Activated CD4-positive, alpha-beta memory T cell treated with anti-CD3 and anti-CD28 coated beads for 36 hours (primary cell): ENCODE measurements at regions of chr15 and their contacts with region 1.

Region 1: DNA sequence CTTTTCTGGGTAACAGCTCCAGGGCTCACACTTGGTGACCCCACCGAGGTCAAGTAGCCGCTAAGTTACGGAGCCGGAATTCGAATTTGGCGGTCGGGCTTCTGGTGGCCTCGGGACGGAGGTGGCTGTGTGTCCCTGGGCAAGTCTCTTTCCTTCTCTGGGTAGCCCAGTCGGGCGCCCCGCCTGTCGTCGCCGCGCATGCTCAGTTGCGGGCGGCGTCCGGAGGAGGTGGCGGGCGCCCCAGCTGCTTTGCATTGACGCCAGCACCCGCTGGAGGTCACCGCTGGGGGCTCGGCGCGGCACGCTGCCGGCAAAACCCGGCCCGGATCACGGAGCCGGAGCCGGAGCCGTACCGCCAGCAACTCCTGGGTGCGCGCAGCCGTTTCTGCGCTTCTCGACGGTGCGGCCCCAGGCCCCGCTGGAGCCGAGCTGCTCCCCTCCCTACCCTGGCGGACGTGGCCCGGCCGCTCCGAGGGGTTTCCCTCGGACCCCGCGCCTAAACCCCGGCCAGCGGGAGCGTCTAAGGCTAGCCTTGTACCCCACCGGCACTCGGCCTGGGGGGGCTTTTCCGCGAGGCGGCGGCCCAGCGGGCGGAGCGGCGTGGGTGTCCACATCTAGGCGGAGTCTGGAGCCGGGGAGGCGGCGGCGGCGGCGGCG is 474 bp upstream of the PDE8A start:
- DNase-seq: peak; percentile 97
- H3K4me3 Mint-ChIP-seq: peak overlapping the region; percentile 90
- H3K27ac Mint-ChIP-seq: peak overlapping the region; percentile 92
- H3K4me1 Mint-ChIP-seq: peaks cover 37% of the 10 kb centered on the region
- H3K27me3 Mint-ChIP-seq: no peaks in the 10 kb centered on the region

Region 2: DNA sequence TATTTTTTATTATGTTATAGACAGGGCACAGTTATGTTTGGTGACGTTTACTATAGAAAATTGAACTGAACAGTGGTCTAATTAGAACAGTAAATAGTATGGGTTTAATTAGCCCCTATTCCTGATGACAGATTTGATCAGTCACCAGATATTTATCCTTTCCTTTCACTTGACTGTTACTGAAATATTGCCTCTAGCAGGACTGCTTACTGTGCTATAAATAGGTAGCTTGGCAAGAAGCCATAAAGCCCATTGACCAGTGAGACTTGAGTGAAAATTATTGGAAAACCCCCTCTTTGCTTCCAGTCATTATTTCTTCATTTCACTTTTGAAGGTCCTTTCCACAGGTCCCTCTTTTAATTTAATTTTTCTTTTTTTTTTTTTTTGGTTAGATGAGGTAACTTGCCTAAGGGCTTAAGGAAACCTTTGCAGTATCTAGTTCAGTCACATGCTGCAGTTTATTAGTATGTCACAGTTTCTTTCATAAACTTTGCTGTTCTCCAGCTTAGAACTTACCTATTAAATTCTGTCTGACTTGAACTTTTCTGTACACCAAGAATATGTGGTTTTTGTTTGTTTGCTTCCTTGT is 1211.7 kb before region 1 on chr15:
- CTCF ChIA-PET with region 1: no interaction called
- POLR2A ChIA-PET with region 1: no interaction called
- intact Hi-C with region 1: no loop called
- DNase-seq: no peak
- H3K4me3 Mint-ChIP-seq: no peak overlapping the region
- H3K27ac Mint-ChIP-seq: no peak overlapping the region
- H3K4me1 Mint-ChIP-seq: no peaks in the 10 kb centered on the region
- H3K27me3 Mint-ChIP-seq: peaks cover 7% of the 10 kb centered on the region

Region 3: DNA sequence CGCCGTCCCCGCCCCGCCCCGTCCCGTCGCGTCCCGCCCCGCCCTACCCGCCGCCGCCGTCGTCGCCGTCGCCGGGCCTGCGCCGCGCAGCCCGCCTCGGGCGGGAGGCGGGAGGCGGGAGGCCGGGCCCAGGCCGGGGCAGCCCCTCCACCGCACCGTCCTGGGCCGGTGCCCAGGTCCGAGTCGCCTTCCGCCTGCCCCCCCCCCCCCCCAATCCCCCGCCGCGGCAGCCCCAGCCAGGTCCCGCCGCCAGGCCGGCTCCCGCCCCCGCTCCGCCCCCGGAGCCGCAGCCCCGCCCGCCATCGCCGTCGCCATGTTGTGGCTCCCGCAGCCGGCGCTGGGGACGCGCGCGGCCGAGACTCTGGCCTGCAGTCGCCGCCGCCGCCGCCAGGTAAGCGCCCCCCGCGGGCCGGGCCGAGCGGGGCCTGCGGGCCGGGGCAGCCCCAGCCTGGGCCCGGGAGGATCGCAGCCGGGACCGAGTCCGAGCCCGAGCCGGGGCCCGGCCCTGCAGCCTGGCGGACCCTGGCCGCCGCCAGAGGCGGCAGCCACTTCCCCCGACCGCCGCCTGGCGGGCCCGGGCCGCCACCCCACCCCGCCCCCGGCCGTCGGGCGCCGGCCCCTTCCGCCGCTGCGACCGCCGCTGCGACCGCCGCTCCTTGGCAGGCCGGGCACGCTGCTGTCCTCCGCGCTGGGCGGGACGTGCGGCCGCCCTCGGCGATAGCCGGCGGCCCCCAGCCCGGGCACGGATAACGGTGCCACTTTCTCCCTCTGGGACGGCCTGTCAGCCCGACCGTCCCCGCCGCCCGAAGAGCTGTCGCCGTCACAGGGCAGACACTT is 232.7 kb before region 1 on chr15 and contains the start of gene ZNF592:
- CTCF ChIA-PET with region 1: no interaction called
- POLR2A ChIA-PET with region 1: interaction called, 3 read pairs
- intact Hi-C with region 1: loop called (anchors 5 kb)
- DNase-seq: peak; percentile 84
- H3K4me3 Mint-ChIP-seq: peak within 1 kb of the TSS; percentile 97
- H3K27ac Mint-ChIP-seq: peak within 1 kb of the TSS; percentile 98
- H3K4me1 Mint-ChIP-seq: peaks cover 57% of the 10 kb centered on the region
- H3K27me3 Mint-ChIP-seq: no peaks in the 10 kb centered on the region
- total RNA-seq, gene ZNF592: 23.8 to 24.3 TPM

Region 4: GRCh38 chr15:84799349-84800187 is 181.6 kb before region 1 on chr15:
- CTCF ChIA-PET with region 1: no interaction called
- POLR2A ChIA-PET with region 1: no interaction called
- intact Hi-C with region 1: no loop called
- DNase-seq: no peak
- H3K4me3 Mint-ChIP-seq: no peak overlapping the region
- H3K27ac Mint-ChIP-seq: no peak overlapping the region
- H3K4me1 Mint-ChIP-seq: no peaks in the 10 kb centered on the region
- H3K27me3 Mint-ChIP-seq: no peaks in the 10 kb centered on the region

Region 5: DNA sequence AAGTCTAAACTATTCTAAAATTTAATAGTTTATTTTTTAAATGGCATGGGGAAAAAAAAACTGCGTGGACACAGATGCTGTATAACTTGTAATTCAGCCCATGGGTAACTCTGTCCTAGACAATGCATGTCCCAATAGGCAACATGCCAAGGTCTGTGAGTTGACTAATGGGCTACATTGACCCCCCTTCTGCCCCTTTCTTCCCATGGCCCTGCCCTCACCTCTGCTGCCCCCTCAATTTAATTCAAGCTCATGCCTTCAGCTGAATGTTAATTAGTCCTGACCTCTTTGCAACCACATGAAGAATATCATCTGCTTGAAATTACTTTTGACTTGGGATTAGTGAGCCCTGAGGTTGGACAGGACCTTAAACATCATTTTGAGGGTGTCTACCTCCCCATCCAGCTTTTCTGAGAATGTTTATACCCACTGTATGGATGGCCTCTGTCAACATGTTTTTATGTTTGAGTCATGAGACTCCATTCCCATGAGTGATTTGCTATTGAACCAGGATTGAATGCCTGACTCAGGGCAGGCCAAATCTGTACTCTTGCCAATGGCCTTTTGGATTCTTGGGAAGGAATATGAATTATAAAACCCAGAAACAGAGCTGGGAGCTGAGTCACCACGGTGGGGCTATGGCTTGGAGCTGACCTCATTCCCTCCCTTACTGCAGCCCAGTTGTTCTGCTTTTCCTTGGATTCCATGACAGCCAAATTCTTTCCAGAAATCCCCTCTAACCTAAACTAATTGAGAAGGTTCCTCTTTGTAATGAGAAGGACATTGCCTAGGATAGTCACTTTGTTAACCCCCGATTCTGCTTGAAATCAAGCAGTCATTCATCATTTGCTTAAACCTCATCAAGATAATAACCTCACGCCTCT is 33.0 kb before region 1 on chr15:
- CTCF ChIA-PET with region 1: no interaction called
- POLR2A ChIA-PET with region 1: no interaction called
- intact Hi-C with region 1: no loop called
- DNase-seq: no peak
- H3K4me3 Mint-ChIP-seq: no peak overlapping the region
- H3K27ac Mint-ChIP-seq: no peak overlapping the region
- H3K4me1 Mint-ChIP-seq: no peaks in the 10 kb centered on the region
- H3K27me3 Mint-ChIP-seq: no peaks in the 10 kb centered on the region

Region 6: DNA sequence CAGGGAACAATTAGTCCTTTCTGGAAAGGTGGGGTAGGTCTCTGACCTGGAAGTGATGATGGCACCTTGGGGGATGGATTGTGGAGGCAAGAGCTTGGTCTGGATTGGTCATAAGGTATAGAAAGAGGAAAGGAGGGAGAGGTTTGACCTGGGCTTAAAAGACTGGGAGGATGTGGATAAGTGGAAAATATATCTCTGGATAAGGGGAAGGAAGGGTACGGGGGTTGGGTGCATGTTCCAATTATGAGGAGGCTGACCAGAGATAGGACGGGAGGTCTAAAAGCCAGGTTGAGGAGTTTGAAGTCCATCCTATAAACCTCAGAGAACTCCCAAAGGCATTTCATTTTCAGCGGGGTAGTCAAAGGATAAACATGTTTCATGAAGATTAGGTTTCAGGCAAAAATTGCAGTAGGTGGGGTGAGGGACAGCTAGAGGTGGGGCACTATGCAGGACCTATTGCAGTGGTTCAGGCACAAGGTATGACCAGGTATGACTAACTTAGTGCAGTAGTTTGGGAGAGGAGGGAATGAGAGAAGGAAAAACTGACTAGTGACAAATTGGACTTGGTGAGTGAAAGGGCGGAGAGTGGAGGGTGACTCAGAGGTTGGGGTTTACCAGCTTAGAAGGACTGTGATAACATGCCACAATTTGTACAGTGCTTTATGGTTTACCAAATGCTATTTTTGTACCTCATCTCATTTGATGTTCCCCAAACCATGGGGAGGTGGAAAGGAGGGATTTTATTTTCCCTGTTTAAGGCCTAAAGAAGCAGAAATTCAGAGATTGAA is 11.2 kb after region 1 on chr15:
- CTCF ChIA-PET with region 1: interaction called, 4 read pairs
- POLR2A ChIA-PET with region 1: interaction called, 21 read pairs
- intact Hi-C with region 1: loop called (anchors 1 kb)
- DNase-seq: peak; percentile 74
- H3K4me3 Mint-ChIP-seq: no peak overlapping the region
- H3K27ac Mint-ChIP-seq: peak overlapping the region; percentile 62
- H3K4me1 Mint-ChIP-seq: peaks cover 54% of the 10 kb centered on the region
- H3K27me3 Mint-ChIP-seq: no peaks in the 10 kb centered on the region

Region 7: DNA sequence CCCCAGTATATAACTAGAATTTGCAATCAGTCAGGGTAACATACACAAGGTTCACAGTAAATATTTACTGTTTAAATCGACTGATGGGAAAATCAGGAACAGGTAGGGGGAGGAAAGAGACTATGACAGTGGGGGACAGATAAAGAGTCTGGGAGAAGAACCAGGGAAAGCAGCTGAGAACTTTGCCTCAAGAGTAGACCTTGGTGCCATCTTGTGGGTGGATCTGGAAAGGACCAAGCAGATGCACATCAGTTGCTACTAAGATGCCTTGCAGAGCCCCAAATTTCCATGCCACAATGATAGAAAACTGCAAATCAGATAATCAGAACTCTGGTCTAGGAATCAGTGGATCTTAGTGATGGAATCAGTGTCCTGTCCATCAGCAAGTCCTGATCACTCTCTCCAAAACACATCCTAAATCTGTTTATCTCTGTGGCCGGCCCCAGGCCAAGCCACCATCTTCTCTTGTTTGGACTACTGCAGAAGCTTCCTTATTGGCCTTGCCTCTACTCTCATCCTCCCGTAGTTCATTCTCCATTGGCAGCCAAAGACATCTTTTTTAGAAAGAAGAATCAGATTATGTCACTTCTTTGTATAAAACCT is 63.2 kb after region 1 on chr15:
- CTCF ChIA-PET with region 1: interaction called, 20 read pairs
- POLR2A ChIA-PET with region 1: interaction called, 5 read pairs
- intact Hi-C with region 1: loop called (anchors 2 kb)
- DNase-seq: peak; percentile 58
- H3K4me3 Mint-ChIP-seq: no peak overlapping the region
- H3K27ac Mint-ChIP-seq: no peak overlapping the region
- H3K4me1 Mint-ChIP-seq: peaks cover 14% of the 10 kb centered on the region
- H3K27me3 Mint-ChIP-seq: no peaks in the 10 kb centered on the region

Region 8: GRCh38 chr15:85100186-85100937 is 119.2 kb after region 1 on chr15:
- CTCF ChIA-PET with region 1: no interaction called
- POLR2A ChIA-PET with region 1: no interaction called
- intact Hi-C with region 1: no loop called
- DNase-seq: no peak
- H3K4me3 Mint-ChIP-seq: no peak overlapping the region
- H3K27ac Mint-ChIP-seq: no peak overlapping the region
- H3K4me1 Mint-ChIP-seq: no peaks in the 10 kb centered on the region
- H3K27me3 Mint-ChIP-seq: no peaks in the 10 kb centered on the region

Region 9: GRCh38 chr15:85380217-85380811 is 399.1 kb after region 1 on chr15 and contains the start of gene AKAP13:
- CTCF ChIA-PET with region 1: no interaction called
- POLR2A ChIA-PET with region 1: interaction called, 4 read pairs
- intact Hi-C with region 1: loop called (anchors 10 kb)
- DNase-seq: peak; percentile 98
- H3K4me3 Mint-ChIP-seq: peak within 1 kb of the TSS; percentile 85
- H3K27ac Mint-ChIP-seq: peak within 1 kb of the TSS; percentile 90
- H3K4me1 Mint-ChIP-seq: peaks cover 53% of the 10 kb centered on the region
- H3K27me3 Mint-ChIP-seq: no peaks in the 10 kb centered on the region
- total RNA-seq, gene AKAP13: 106 to 113 TPM

Region 10: DNA sequence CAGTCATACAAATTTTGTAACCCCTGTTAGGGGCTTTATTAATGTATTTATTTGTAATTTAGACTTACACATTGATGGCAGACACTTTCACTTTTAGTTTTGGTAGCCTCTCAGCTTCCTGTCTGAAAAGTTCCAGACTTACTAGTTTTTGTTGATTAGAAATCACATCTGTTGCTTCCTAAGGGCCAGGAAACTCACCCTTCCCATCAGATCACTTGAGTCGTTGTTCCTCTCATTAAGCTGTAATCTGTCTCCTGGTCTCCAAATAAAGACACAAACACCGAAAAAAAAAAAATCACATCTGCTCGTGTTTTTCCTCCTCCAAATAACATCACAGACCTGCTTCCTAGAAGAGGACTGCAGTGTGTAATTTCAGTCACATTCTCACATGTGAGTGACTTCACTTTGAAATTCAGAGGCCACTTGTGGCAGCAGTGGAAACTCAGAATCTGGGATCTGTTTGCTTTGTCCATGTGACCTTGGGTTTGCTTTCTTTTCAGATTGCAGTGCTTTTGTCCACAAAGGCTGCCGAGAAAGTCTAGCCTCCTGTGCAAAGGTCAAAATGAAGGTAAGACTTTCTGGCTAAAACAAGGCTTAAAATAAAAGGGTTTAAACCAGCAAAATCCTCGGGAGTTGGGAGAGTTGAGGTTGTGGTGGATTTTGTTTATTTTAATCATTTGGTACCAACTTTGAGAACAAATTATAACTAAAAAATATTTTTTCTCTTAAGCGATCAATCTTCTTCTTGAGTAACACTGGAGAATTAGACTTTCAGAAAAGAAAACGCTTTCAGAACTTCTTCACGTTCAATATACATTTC is 726.5 kb after region 1 on chr15:
- CTCF ChIA-PET with region 1: no interaction called
- POLR2A ChIA-PET with region 1: no interaction called
- intact Hi-C with region 1: loop called (anchors 10 kb)
- DNase-seq: peak; percentile 58
- H3K4me3 Mint-ChIP-seq: peak overlapping the region; percentile 76
- H3K27ac Mint-ChIP-seq: peak overlapping the region; percentile 94
- H3K4me1 Mint-ChIP-seq: peaks cover 87% of the 10 kb centered on the region
- H3K27me3 Mint-ChIP-seq: no peaks in the 10 kb centered on the region